ENCODE measurements at regions of chr6 and their contacts with region 1.

Region 1: DNA sequence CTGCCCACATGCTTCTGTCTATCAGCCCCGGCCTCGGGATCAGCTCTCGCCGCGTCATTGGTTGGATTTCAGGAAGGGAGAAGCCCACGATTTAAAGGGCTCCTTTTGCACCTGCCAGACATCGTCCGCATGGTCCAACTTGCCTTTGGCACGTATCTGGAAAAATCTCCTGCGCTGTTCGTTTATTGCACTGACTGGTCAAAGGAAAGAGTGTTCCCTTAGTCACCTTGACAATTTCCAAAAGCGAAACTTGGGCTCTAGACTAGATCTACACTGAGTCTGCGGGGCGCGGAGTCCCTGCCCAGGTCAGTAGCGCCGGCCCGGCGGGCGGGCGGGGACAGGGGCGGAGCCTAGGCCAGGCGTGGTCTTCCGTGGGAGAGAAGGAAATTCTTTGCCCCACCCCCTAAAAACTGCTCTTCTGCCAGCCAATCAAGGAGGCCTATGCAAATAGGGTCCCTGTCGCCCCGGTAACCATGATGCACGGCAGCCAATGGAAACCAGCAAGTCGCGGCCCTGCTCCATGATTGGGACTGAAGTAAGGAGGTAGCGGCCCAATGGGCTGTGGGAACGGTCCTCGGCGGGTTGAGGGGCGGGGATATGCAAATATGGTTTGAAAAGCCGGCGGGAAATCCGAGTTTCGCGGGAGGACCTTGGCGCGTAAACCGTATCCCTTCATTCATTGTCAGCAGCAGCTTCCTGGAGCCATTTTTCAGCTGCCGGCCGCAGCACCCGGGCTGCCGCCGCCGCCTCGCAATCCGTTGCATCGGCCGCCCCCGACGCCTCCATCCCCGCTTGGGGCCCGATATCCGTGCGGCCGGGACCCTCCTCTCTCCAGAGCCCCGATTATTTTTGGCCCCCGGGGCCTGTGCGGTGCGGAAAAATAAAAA is at the start of gene E2F3:
- DNase-seq: peak; percentile 100
- H3K4me3 Mint-ChIP-seq: peak within 1 kb of the TSS; percentile 90
- H3K27ac Mint-ChIP-seq: peak within 1 kb of the TSS; percentile 99
- H3K4me1 Mint-ChIP-seq: peaks cover 10% of the 10 kb centered on the region
- H3K27me3 Mint-ChIP-seq: no peaks in the 10 kb centered on the region
- CTCF ChIP-seq: no peak
- total RNA-seq, gene E2F3: 69.1 and 69.8 TPM in 2 replicates

Region 2: GRCh38 chr6:20092071-20092566 is 309.3 kb before region 1 on chr6:
- CTCF ChIA-PET with region 1: no interaction called
- intact Hi-C with region 1: loop called (anchors 5 kb)
- DNase-seq: peak; percentile 34
- H3K4me3 Mint-ChIP-seq: no peak overlapping the region
- H3K27ac Mint-ChIP-seq: no peak overlapping the region
- H3K4me1 Mint-ChIP-seq: no peaks in the 10 kb centered on the region
- H3K27me3 Mint-ChIP-seq: no peaks in the 10 kb centered on the region
- CTCF ChIP-seq: peak; percentile 87

Region 3: DNA sequence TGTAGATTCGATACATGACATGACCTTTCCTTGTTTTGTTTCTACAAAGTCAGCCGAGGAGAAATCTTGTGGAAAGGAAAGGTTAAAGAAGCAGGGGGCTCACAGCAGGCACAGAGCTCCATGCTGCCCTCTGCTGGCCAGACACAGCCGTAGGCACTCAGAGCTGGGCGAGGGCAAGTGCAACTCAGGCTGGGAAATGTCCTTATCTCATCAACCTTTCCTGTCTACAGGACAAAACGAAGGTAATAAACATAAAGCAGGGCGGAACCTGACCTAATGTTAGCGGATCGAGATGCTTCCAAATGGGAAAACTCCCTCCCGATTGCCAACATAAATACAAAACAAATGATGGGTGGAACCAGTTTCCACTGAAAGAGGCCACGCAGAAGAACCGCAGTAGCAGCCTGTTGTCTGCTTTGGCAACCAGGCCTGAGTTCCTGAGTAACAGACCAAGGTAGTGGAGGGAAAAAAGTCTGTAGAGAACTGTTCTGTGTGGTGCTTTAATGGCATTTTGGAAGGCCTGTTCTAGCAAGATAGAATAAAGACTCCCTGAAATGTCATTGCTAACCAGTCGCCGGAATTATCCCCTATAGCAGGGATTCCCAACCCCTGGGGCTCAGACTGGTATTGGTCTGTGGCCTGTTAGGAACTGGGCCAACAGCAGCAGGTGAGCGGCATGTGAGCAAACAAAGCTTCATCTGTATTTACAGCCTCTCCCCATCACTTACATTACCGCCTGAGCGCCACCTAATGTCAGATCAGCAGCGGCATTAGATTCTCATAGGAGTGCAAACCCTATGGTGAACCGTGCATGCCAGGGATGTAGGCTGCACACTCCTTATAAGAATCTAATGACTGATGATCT is 274.4 kb before region 1 on chr6:
- CTCF ChIA-PET with region 1: interaction called, 13 read pairs
- intact Hi-C with region 1: no loop called
- DNase-seq: peak; percentile 92
- H3K4me3 Mint-ChIP-seq: no peak overlapping the region
- H3K27ac Mint-ChIP-seq: peak overlapping the region; percentile 46
- H3K4me1 Mint-ChIP-seq: peaks cover 31% of the 10 kb centered on the region
- H3K27me3 Mint-ChIP-seq: no peaks in the 10 kb centered on the region
- CTCF ChIP-seq: peak; percentile 98

Region 4: GRCh38 chr6:20252311-20252710 is 149.1 kb before region 1 on chr6:
- CTCF ChIA-PET with region 1: no interaction called
- intact Hi-C with region 1: no loop called
- DNase-seq: no peak
- H3K4me3 Mint-ChIP-seq: no peak overlapping the region
- H3K27ac Mint-ChIP-seq: no peak overlapping the region
- H3K4me1 Mint-ChIP-seq: peaks cover 18% of the 10 kb centered on the region
- H3K27me3 Mint-ChIP-seq: no peaks in the 10 kb centered on the region
- CTCF ChIP-seq: no peak

Region 5: GRCh38 chr6:20291764-20292580 is 109.5 kb before region 1 on chr6:
- CTCF ChIA-PET with region 1: interaction called, 4 read pairs
- intact Hi-C with region 1: loop called (anchors 1 kb)
- DNase-seq: peak; percentile 93
- H3K4me3 Mint-ChIP-seq: no peak overlapping the region
- H3K27ac Mint-ChIP-seq: peak overlapping the region; percentile 14
- H3K4me1 Mint-ChIP-seq: no peaks in the 10 kb centered on the region
- H3K27me3 Mint-ChIP-seq: no peaks in the 10 kb centered on the region
- CTCF ChIP-seq: peak; percentile 97

Region 6: GRCh38 chr6:20412682-20413073 is 11.2 kb after region 1 on chr6:
- CTCF ChIA-PET with region 1: interaction called, 21 read pairs
- intact Hi-C with region 1: no loop called
- DNase-seq: no peak
- H3K4me3 Mint-ChIP-seq: no peak overlapping the region
- H3K27ac Mint-ChIP-seq: no peak overlapping the region
- H3K4me1 Mint-ChIP-seq: peaks cover 55% of the 10 kb centered on the region
- H3K27me3 Mint-ChIP-seq: no peaks in the 10 kb centered on the region
- CTCF ChIP-seq: no peak

Region 7: GRCh38 chr6:20455251-20455940 is 53.9 kb after region 1 on chr6:
- CTCF ChIA-PET with region 1: interaction called, 4 read pairs
- intact Hi-C with region 1: loop called (anchors 2 kb)
- DNase-seq: no peak
- H3K4me3 Mint-ChIP-seq: no peak overlapping the region
- H3K27ac Mint-ChIP-seq: peak overlapping the region; percentile 64
- H3K4me1 Mint-ChIP-seq: peaks cover 44% of the 10 kb centered on the region
- H3K27me3 Mint-ChIP-seq: no peaks in the 10 kb centered on the region
- CTCF ChIP-seq: no peak

Region 8: GRCh38 chr6:20811109-20811746 is 409.8 kb after region 1 on chr6:
- CTCF ChIA-PET with region 1: no interaction called
- intact Hi-C with region 1: no loop called
- DNase-seq: peak; percentile 72
- H3K4me3 Mint-ChIP-seq: peak overlapping the region; percentile 24
- H3K27ac Mint-ChIP-seq: peak overlapping the region; percentile 87
- H3K4me1 Mint-ChIP-seq: peaks cover 20% of the 10 kb centered on the region
- H3K27me3 Mint-ChIP-seq: no peaks in the 10 kb centered on the region
- CTCF ChIP-seq: no peak